ENCODE measurements at regions of chr11 and their contacts with region 1.

Region 1: GRCh38 chr11:30801357-30801756 is 215.2 kb upstream of the MPPED2 start:
- DNase-seq: no peak
- ATAC-seq: no peak
- H3K4me3 ChIP-seq: no peak overlapping the region
- H3K27ac ChIP-seq: no peak overlapping the region
- H3K4me1 ChIP-seq: no peaks in the 10 kb centered on the region
- H3K27me3 ChIP-seq: no peaks in the 10 kb centered on the region
- CTCF ChIP-seq: no peak

Region 2: DNA sequence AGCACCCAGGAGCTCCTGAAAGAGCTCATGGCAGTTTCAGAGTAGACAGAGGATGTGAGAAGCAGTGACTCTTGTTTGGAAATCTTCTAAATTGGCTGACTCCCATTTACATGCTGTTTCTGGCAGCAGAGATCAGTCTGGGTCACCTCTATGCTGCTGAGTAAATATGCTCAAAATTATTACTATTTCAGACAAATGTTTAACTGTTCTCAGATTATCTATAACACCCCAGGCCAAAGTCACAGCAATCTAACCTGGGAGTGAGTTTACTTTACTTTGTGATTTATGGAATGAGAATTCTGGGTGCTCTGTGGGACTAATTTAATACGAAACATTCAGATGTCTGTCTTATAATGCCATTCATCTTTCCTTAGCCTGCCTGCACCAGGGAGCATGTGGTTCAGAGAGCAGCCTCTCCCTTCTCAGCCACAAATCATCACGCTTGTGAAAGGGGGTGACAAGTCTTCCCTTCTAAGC is 67.3 kb after region 1 on chr11:
- intact Hi-C with region 1: loop called in 1 of 10 experiments (anchors 10 kb)
- DNase-seq: no peak
- ATAC-seq: peak in 4 of 8 donors; percentile 25 to 70 (median 50)
- H3K4me3 ChIP-seq: no peak overlapping the region
- H3K27ac ChIP-seq: no peak overlapping the region
- H3K4me1 ChIP-seq: peaks cover 0 to 4% (median 2%) of the 10 kb centered on the region in 9 donors
- H3K27me3 ChIP-seq: no peaks in the 10 kb centered on the region
- CTCF ChIP-seq: no peak

Measured in heart right ventricle (tissue), 16 donors.